ENCODE measurements at regions of chr3 and their contacts with region 1.

Region 1: GRCh38 chr3:9955067-9955502 is 2.9 kb upstream of the PRRT3 start:
- DNase-seq: no peak
- H3K4me3 ChIP-seq: no peak overlapping the region
- H3K27me3 ChIP-seq: no peaks in the 10 kb centered on the region
- CTCF ChIP-seq: no peak

Region 2: DNA sequence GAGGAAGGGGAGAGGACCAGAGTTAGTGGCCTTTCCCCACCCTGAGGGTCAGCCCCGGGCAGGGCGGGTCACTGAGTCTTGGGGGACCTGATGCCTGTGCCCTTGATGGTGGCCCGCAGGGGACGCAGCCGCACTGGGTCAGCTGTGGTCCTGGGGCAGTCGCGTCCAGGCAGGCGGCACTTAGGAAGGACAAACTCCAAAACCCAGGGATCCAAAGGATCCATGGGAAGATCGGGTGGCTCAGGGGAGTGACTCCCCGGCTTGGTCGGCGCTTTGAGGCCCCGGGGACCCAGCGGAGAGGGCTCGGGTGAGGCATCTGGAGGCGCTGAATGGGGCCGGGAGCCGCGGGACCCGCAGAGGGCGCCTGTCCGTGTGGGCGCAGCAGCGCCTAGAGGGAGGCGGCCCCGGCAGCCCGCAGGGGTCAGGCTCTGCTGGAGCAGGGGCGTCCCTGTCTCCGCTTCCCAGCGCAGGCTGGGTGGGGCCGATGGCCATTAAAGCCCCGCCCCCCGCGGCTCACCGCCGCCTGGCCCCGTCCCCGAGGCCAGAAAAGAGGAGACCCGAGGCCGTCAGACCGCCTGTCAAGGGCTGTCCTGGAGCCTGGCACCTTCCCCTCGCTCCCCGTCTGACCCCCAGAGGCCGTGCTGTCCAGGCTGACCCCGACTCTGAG is 92.6 kb before region 1 on chr3:
- CTCF ChIA-PET with region 1: no interaction called
- POLR2A ChIA-PET with region 1: interaction called, 10 read pairs
- DNase-seq: no peak
- H3K4me3 ChIP-seq: peak overlapping the region; percentile 14
- H3K27me3 ChIP-seq: no peaks in the 10 kb centered on the region
- CTCF ChIP-seq: peak; percentile 44

Region 3: GRCh38 chr3:9878700-9879099 is 76.4 kb before region 1 on chr3:
- CTCF ChIA-PET with region 1: no interaction called
- POLR2A ChIA-PET with region 1: no interaction called
- DNase-seq: no peak
- H3K4me3 ChIP-seq: no peak overlapping the region
- H3K27me3 ChIP-seq: no peaks in the 10 kb centered on the region
- CTCF ChIP-seq: no peak

Region 4: DNA sequence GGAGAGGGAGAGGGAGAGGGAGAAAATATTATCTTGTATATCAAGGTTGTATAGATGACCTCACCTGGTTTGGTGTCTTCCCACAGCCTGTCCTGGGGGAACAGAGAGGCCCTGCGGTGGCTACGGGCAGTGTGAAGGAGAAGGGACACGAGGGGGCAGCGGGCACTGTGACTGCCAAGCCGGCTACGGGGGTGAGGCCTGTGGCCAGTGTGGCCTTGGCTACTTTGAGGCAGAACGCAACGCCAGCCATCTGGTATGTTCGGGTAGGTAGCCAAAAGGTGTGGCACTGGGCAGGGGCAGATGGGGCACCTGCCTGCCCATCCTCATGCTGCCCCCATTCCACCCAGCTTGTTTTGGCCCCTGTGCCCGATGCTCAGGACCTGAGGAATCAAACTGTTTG is 14.3 kb before region 1 on chr3:
- CTCF ChIA-PET with region 1: no interaction called
- POLR2A ChIA-PET with region 1: no interaction called
- DNase-seq: no peak
- H3K4me3 ChIP-seq: no peak overlapping the region
- H3K27me3 ChIP-seq: no peaks in the 10 kb centered on the region
- CTCF ChIP-seq: no peak